Dendritic cell treated with granulocyte-macrophage colony-stimulating factor and Interleukin-4, amounts not matched to agents 40 ng/mL and 50 ng/mL, for 4 days (primary cell): ENCODE measurements at regions of chr19 and their contacts with region 1.

Region 1: GRCh38 chr19:35716801-35717666 is 769 bp upstream of the KMT2B start:
- H3K4me3 Mint-ChIP-seq: peak overlapping the region; percentile 91
- H3K27ac Mint-ChIP-seq: peak overlapping the region; percentile 87
- H3K4me1 Mint-ChIP-seq: peaks cover 54% of the 10 kb centered on the region
- H3K27me3 Mint-ChIP-seq: peaks cover 22% of the 10 kb centered on the region

Region 2: DNA sequence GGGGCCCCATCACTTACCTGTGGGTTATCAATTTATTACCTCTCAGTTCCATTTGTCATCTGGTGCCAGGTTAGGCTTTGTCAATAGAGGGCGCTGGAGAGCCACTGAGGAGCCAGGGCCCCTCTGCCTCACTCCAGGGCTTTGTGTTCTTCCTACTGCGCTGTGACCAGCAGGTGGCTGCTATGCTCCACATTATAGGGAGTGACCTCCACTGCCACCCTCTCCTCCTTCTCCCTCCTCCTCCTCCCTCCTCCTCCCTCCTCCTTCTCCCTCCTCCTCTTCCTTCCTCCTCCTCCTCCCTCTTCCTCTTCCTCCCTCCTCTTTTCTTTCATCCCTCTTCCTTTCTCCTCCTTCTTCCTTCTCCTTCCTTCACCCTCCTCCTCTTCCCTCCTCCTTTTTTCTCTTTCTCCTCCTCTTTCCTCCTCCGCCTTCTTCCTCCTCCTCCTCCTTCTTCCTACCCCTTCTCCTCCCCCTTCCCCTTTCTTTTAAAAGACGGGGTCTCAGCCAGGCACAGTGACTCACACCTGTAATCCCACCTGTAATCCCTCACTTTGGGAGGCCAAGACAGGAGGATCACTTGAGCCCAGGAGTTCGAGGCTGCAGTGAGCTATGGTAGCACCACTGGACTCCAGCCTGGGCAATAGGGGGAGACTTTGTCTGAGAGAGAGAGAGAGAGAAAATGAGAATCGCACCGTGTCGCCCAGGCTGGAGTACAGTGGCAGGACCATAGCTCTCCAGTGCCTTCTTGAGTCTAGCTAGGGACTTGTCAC is 23.0 kb before region 1 on chr19:
- intact Hi-C with region 1: loop called (anchors 1 kb)
- H3K4me3 Mint-ChIP-seq: no peak overlapping the region
- H3K27ac Mint-ChIP-seq: no peak overlapping the region
- H3K4me1 Mint-ChIP-seq: peaks cover 4% of the 10 kb centered on the region
- H3K27me3 Mint-ChIP-seq: peaks cover 4% of the 10 kb centered on the region

Region 3: DNA sequence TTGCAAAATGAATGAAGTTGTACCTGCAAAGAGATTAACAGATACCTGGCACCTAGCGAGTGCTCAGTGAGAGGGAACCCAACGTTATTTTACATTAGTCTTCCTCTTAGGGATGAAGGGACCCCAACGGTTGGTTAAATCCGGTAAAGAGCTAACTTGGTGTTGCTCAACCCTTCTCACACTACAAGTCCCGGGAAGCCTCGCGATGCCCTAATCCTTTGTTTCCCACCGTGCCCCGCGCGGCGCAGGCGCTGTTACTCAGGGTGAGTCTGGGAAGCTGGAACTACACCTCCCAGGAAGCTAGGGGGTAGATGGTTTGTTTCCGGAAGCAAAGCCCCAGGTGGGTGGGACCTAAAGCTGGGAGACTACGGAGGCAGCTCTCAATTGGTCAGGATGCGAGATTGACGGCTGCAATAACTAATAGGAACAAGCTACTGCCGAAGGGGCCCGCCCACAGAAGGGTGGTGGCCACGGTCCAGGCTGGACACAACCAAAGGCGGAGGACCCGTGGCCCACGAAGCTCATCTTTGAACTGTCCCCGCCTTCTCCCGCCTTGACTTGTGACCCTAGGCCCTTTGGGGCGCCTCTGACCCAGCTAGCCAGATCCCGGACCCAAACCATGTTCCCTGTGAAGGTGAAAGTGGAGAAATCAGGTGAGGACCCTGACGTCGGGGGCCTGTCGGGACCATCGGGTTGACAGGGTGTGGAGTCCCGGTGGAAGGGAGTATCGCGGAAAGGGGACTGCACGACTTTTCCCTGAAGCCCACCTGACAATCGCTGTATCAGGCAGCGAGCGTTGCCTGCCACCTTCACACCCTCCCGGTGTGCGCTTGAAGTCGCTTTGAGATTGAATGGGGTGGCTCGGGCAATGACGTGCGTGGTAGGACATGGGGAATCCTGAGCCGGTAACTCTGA is 31.3 kb after region 1 on chr19 and contains the start of gene LIN37:
- intact Hi-C with region 1: loop called (anchors 2 kb)
- H3K4me3 Mint-ChIP-seq: peak within 1 kb of the TSS; percentile 92
- H3K27ac Mint-ChIP-seq: peak within 1 kb of the TSS; percentile 86
- H3K4me1 Mint-ChIP-seq: peaks cover 64% of the 10 kb centered on the region
- H3K27me3 Mint-ChIP-seq: no peaks in the 10 kb centered on the region